ENCODE measurements at regions of chr5 and their contacts with region 1.

Region 1: DNA sequence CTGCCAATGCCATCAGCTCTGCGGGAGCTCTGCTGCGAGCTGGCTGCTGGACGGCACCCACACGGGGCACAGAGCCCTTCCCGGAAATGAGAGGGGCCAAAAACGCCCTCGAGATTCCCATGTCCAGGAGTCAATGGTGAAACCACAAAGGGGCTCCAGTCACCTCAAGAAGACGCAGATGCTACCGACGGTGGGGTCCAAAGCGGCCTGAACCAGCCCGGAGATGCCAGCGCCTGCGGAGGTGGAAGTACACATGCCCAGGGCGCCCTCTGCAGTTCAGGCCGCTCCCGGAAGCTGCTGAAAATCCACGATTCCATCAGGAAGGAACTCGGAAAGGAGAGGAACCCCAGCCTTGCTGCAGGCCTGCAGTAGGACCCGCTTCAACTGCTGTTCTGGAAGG is 82.4 kb upstream of the SELENOP start:
- DNase-seq: no peak
- ATAC-seq: peak; percentile 25
- H3K4me3 ChIP-seq: no peak overlapping the region
- H3K27ac ChIP-seq: no peak overlapping the region
- H3K4me1 ChIP-seq: no peaks in the 10 kb centered on the region
- H3K27me3 ChIP-seq: no peaks in the 10 kb centered on the region
- CTCF ChIP-seq: peak; percentile 18

Region 2: GRCh38 chr5:42807722-42808447 is 86.2 kb before region 1 on chr5:
- intact Hi-C with region 1: loop called (anchors 10 kb)
- DNase-seq: no peak
- ATAC-seq: peak; percentile 67
- H3K4me3 ChIP-seq: peak overlapping the region; percentile 64
- H3K27ac ChIP-seq: no peak overlapping the region
- H3K4me1 ChIP-seq: peaks cover 20% of the 10 kb centered on the region
- H3K27me3 ChIP-seq: no peaks in the 10 kb centered on the region
- CTCF ChIP-seq: no peak